SK-N-SH (cell line): ENCODE measurements at regions of chr4 and their contacts with region 1.

Region 1: GRCh38 chr4:140756319-140757231 is at the start of gene TBC1D9:
- DNase-seq: peak; percentile 81
- H3K4me3 ChIP-seq: peak within 1 kb of the TSS; percentile 89 to 93
- H3K27ac ChIP-seq: peak within 1 kb of the TSS; percentile 77 to 91
- H3K4me1 ChIP-seq: peaks cover 0 to 10% of the 10 kb centered on the region in 2 experiments; a peak in 3 of 4 replicates
- H3K27me3 ChIP-seq: no peaks in the 10 kb centered on the region
- CTCF ChIP-seq: no peak; the same call in none of the 2 replicates
- EP300 ChIP-seq: peak; percentile 33 to 35; a peak in 2 of 4 replicates
- RAD21 ChIP-seq: no peak; the same call in 1 of the 2 replicates
- polyA plus RNA-seq, gene TBC1D9: 13.5 and 16.1 TPM in 2 replicates

Region 2: DNA sequence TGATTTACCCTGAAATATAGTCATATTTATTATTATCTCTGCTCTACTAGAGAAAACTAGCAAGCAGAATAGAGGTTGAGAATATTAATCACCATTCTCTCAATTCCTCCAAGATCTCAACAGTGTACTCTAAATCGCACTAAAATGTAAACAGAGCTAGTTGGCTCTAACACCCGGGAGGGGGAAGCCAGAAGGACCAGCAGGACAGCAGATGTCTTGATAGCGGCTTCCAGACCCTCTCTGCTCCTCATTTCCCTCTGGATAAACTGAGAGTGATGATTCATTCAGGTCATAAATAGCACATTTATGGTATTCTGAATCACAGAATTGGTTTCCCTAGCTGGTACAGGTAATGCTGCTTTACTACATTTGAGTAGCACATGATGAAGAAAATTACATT is 82.8 kb before region 1 on chr4:
- CTCF ChIA-PET with region 1: interaction called, 3 read pairs
- POLR2A ChIA-PET with region 1: interaction called, 12 read pairs
- DNase-seq: peak; percentile 79
- H3K4me3 ChIP-seq: no peak overlapping the region
- H3K27ac ChIP-seq: peak overlapping the region in 1 of 2 experiments; percentile 86; a peak in 2 of 4 replicates
- H3K4me1 ChIP-seq: peaks cover 4 to 14% of the 10 kb centered on the region in 2 experiments; a peak in 3 of 4 replicates
- H3K27me3 ChIP-seq: no peaks in the 10 kb centered on the region
- CTCF ChIP-seq: no peak
- EP300 ChIP-seq: peak in 1 of 2 experiments; percentile 64; a peak in 1 of 4 replicates
- RAD21 ChIP-seq: no peak

Region 3: DNA sequence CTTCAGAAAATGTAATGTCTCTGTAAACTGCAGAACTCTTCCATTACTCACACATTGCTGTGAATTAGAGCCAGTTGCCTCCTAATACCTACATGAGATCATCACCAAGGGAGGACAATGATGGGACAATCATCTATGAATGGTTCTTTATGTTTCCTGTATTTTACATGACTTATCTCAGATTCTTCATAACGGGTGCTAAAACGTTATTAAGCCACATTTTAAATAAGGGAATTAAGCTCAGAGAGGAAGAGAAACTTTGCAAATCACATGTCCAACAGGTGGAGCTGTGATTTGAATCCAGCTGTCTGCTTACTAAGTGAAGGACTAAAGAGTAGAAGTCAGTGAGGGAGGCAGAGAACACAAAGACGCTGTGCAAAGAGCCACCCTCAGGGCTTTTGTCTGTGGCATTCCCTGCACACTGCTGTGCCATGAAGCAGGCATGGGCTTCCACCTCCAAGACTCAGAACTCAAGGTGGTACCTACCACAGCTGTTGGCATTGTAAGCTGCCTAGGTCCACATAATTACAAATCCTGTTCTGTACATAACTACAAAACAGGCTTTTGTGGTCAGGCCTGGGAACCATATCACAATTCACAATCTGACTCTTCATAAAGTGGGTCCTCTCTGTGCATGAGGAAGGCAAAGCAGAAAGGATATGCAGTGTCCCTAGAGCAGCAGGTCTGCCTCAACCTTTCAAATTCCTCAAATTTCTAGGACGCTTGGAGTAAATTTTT is 13.2 kb before region 1 on chr4:
- CTCF ChIA-PET with region 1: interaction called, 11 read pairs
- POLR2A ChIA-PET with region 1: interaction called, 5 read pairs
- DNase-seq: peak; percentile 12
- H3K4me3 ChIP-seq: 0 out of 4 replicates have a peak overlapping the region, but pooled peaks of 1 of the 2 experiments have one; percentile 28
- H3K27ac ChIP-seq: peak overlapping the region; percentile 71 to 83
- H3K4me1 ChIP-seq: peaks cover 18 to 23% of the 10 kb centered on the region in 2 experiments
- H3K27me3 ChIP-seq: no peaks in the 10 kb centered on the region
- CTCF ChIP-seq: peak; percentile 48
- EP300 ChIP-seq: no peak
- RAD21 ChIP-seq: peak; percentile 35; the same call in 1 of the 2 replicates

Region 4: DNA sequence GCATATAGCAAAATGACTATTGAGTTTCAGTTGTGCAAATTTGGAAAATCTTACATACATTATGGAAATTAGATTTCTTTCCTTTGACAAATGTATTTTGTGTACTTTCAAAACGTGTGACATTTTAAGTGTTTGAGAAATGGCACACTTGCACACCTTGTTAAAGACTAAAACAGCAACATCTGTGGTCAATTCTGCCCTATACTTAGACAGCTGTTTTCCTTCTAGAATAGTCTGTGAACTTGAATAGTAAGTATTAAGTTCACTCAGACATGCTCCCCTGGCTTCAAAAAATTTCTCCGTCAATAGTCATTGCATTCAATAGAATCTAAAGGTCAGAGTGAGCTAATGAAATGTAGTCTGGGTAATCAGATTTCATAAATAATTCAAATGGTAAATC is 21.3 kb after region 1 on chr4:
- CTCF ChIA-PET with region 1: no interaction called
- POLR2A ChIA-PET with region 1: no interaction called
- DNase-seq: no peak
- H3K4me3 ChIP-seq: no peak overlapping the region
- H3K27ac ChIP-seq: no peak overlapping the region
- H3K4me1 ChIP-seq: no peaks in the 10 kb centered on the region
- H3K27me3 ChIP-seq: no peaks in the 10 kb centered on the region
- CTCF ChIP-seq: no peak
- EP300 ChIP-seq: no peak
- RAD21 ChIP-seq: no peak